Ascending aorta (tissue), 2 donors: ENCODE measurements at regions of chr2 and their contacts with region 1.

Region 1: DNA sequence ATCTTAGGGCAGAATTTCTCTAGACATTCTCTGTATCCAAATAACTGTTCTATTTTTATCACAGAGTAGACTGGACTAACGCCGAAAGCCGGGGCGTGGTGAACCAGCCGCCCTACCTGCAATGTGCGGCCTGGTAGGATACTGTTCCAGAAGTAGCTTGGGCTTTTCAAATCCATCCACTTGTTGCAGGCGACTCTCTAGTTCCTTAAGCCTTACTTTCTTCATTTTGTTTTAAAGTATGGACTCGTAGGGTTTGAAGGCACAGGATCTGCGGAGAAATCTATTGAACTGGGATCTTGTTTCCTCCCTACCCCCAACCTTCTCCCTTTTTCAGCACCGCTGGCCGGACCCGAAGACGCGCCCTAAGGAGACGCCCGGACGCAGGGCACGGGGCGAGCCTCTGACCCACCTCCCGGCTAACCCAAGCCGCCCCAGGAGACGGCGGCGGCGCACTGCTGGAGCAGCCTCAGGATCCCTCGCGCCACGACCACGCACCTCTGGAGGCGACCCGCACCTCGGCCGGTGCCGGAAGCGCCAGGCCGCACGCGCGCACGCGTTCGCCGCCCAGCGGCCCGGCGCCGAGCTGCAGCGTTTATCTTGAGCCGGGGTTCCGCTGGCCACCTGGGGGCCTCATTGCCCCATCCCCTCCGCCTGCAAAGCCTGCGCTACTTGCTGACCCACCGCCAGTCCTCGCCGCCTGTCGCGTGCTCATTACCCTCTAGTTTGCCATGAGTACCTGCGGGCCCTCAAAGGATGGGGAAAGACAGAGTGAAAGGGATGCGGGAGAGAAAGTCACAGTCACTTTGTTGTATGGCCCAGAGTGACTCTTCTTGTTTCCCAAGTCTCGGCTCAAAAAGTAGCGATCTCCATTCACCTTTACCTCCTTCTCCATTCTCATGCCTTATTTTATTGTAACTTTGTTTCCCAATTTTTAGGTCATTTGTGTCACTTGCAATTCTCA is at the start of gene METTL5:
- DNase-seq: peak in 1 of 2 donors; percentile 90
- H3K4me3 ChIP-seq: peak within 1 kb of the TSS; percentile 70 to 81
- H3K27ac ChIP-seq: peak within 1 kb of the TSS; percentile 85 to 86
- H3K4me1 ChIP-seq: peaks cover 0 to 34% of the 10 kb centered on the region in 2 donors
- H3K27me3 ChIP-seq: no peaks in the 10 kb centered on the region
- CTCF ChIP-seq: peak; percentile 69 to 95 (median 91)
- total RNA-seq, gene METTL5: 42.6 TPM

Region 2: GRCh38 chr2:169584005-169584877 is 240.4 kb before region 1 on chr2 and contains the start of gene PPIG:
- intact Hi-C with region 1: loop called (anchors 5 kb)
- DNase-seq: peak; percentile 62 to 95
- H3K4me3 ChIP-seq: peak within 1 kb of the TSS; percentile 77 to 86
- H3K27ac ChIP-seq: peak within 1 kb of the TSS; percentile 96 to 98
- H3K4me1 ChIP-seq: peaks cover 6 to 22% of the 10 kb centered on the region in 2 donors
- H3K27me3 ChIP-seq: no peaks in the 10 kb centered on the region
- CTCF ChIP-seq: no peak
- total RNA-seq, gene PPIG: 30.2 TPM

Region 3: DNA sequence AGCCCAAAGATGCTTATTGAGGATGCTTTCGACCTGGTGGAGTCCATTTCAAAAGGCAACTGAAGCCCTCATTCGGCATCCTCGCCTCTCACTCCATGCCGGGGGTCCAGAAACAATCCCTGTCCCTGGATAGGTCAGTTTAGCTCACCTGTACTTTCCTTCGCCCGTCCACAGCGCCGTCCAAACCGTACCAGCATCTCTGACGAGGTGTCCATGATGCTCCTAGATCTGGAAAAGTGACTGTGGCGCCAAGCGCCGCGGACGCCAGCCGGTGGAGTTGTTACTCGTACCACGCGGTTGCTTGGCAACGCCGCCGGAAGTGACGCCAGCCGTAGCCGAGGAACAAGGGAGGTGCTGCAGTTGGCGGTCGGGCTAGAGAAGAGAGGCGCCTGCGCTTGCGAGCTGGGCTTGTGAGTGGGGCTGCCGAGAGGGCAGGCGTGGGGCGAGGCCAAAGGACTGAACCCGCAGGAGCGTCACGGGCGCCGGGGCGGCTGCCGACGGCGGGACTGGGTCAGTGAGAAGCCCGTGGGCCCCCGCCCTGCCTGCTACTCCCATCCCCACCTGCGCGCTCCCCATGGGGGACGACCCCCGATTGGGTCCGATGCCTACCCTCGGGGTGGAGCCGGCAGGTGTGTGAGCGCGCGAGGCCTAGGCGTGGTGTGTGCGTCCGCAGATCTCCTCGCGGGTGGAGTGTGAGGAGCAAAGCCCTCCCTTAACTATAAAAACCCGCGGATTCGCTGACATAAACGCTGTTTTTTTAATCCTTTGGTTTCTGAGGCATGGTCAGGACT is 130.3 kb before region 1 on chr2 and contains the starts of genes CFAP210 and PHOSPHO2:
- intact Hi-C with region 1: loop called (anchors 2 kb)
- DNase-seq: peak; percentile 99 to 100
- H3K4me3 ChIP-seq: peak within 1 kb of the TSS; percentile 86 to 99
- H3K27ac ChIP-seq: peak within 1 kb of the TSS; percentile 80 to 84
- H3K4me1 ChIP-seq: peaks cover 0 to 4% of the 10 kb centered on the region in 2 donors
- H3K27me3 ChIP-seq: no peaks in the 10 kb centered on the region
- CTCF ChIP-seq: no peak
- total RNA-seq, gene CFAP210: not detected
- total RNA-seq, gene PHOSPHO2: not detected

Region 4: DNA sequence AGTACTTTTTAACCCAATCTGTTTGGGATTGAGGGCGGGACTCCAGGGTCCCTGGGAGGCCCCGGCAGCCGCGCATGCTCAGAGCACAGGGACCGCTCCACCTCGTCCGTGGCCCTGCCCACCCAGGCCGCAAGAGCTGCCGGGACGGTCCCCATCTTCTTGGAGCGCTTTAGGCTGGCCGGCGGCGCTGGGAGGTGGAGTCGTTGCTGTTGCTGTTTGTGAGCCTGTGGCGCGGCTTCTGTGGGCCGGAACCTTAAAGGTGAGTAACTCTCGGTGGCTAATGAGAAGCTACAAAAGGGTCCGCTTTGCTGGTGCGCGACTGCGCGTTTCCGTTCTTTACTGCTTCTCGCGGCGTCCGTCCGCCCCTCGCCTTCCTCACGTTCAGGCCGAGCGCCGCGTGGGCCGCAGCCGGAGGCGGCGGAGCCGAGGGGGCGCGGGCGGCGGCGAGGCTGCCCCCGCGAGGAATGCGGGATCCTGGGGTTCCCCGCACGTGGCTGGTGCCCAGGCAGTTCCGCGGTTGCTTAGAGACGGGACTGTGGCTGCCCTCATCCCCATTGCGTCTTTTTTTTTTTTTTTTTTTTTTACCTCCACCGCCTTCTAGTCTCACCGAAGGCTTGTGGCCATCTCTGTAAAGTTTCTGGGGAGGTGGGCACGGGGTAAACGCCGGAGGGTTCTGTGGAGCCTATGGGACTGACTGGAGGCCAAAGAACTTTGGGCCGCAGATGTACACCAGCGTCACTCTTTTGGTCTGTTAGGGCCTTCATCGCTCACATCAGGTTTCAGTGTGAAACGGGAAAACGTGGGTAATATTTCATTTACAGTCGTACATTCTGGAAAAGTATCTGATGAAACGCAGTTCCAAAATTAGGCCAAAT is 25.7 kb before region 1 on chr2 and contains the start of gene SSB:
- intact Hi-C with region 1: loop called (anchors 1 kb)
- DNase-seq: peak; percentile 47 to 95
- H3K4me3 ChIP-seq: peak within 1 kb of the TSS; percentile 56 to 81
- H3K27ac ChIP-seq: peak within 1 kb of the TSS; percentile 67 to 82
- H3K4me1 ChIP-seq: peaks cover 0 to 17% of the 10 kb centered on the region in 2 donors
- H3K27me3 ChIP-seq: no peaks in the 10 kb centered on the region
- CTCF ChIP-seq: no peak
- total RNA-seq, gene SSB: 42.6 TPM

Region 5: DNA sequence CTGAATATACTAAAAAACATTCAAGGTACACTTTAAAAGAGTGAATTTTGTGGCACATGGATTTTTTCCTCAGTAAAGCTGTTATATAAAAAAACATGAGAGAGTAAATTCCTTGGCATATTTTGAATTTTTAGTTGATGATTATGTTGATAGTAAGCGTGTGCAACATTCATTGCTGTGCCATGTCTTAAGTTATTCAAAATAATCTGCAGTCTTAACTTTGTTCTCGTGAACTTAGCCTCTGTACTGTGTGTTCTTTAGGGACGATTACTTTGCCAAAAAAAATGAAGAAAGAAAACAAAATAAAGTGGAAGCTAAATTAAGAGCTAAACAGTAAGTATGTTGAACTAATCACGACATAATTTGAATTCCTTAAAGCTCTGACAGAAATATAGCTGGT is 16.4 kb before region 1 on chr2:
- intact Hi-C with region 1: loop called (anchors 1 kb)
- DNase-seq: no peak
- H3K4me3 ChIP-seq: no peak overlapping the region
- H3K27ac ChIP-seq: no peak overlapping the region
- H3K4me1 ChIP-seq: peaks cover 0 to 18% of the 10 kb centered on the region in 2 donors
- H3K27me3 ChIP-seq: no peaks in the 10 kb centered on the region
- CTCF ChIP-seq: no peak

Region 6: DNA sequence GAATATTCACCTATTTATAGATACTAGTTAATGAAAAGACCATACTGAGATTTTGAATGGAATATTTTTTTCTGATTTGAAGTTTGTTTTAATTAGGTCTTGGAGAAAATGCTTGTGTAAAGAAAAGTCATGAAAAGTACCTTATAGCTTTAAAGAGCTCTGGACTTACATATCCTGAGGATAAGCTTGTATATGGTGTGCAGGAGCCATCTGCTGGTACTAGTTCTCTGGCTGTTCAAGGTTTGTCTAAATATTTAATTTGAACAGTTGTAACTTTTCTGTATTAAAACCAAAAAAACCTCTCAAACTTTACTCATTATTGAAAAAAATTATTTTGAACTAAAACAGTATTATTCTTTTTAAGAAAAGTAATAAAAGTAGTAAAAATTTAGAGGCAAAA is 52.7 kb after region 1 on chr2:
- intact Hi-C with region 1: loop called (anchors 2 kb)
- DNase-seq: no peak
- H3K4me3 ChIP-seq: no peak overlapping the region
- H3K27ac ChIP-seq: no peak overlapping the region
- H3K4me1 ChIP-seq: no peaks in the 10 kb centered on the region
- H3K27me3 ChIP-seq: no peaks in the 10 kb centered on the region
- CTCF ChIP-seq: peak in 1 of 3 experiments; percentile 20

Region 7: GRCh38 chr2:169928463-169928864 is 103.8 kb after region 1 on chr2:
- intact Hi-C with region 1: loop called (anchors 2 kb)
- DNase-seq: no peak
- H3K4me3 ChIP-seq: no peak overlapping the region
- H3K27ac ChIP-seq: no peak overlapping the region
- H3K4me1 ChIP-seq: no peaks in the 10 kb centered on the region
- H3K27me3 ChIP-seq: no peaks in the 10 kb centered on the region
- CTCF ChIP-seq: peak; percentile 48 to 71 (median 53)